IMR-90 (cell line): ENCODE measurements at regions of chr1 and their contacts with region 1.

Region 1: DNA sequence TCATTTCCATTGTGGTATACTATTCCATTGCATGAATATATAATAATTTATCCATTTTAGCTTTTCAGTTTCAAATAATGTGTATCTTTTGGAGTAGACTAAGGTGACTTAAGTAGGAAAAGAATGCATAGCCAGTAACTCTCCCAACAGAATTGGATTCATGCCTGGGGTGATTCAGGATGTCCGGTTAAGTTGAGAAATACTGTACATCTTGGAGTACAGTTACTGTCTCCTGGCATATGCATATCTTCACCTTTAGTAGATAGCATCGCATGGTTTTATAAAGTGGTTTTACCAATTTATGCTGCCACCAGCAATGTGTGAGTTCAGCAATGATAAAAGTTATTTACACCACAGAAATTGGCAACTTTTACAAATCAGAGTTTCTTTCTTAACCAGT is 18.6 kb upstream of the SLC6A9 start:
- DNase-seq: peak; percentile 97
- ATAC-seq: peak; percentile 57
- H3K4me3 ChIP-seq: no peak overlapping the region
- H3K27ac ChIP-seq: peak overlapping the region; percentile 70
- H3K4me1 ChIP-seq: peaks cover 18% of the 10 kb centered on the region
- H3K27me3 ChIP-seq: no peaks in the 10 kb centered on the region
- CTCF ChIP-seq: no peak
- POLR2A ChIP-seq: no peak
- RAD21 ChIP-seq: no peak

Region 2: DNA sequence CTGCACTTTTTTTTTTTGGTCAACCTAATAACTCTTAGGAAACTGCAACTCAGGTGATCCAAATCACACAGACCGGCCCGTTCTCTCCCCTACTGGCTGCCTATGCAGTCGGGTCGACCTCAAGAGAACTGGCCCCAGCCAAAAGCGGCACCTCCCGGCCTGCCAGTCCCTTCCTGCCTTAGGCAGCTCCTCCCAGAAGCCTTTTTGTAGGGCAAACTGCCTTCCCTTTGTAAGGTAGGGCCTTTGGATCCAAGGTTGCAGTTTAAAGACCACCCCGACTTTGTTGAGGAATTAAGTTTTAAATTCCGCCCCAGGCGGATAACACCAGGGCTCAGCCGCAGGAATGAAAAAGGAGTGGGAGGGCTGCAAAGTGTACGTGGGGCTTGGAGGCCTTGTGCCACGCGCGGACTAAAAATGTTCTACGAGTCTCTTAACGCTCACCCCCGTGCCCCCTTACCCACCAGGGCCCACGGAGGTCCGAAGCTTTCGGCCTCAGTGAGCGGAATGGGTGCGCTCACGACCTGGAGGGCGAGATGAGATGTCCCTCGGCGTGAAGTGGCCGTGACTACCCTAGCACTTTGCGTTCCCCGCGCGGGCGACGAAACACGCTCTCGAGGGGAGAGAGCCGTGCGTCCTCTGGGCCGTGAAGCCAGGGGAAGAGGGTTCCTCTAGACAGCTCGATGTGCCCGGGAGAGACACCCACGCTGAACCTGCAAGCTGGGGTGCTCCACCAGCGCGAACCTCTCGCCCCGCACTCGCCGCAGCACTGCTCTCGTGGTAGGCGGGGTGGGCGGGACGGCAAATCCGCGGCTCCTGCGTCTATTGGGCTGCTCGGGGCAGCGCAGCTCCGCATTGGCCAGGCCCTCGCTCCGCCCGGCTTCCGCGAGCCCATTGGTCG is 343.0 kb before region 1 on chr1:
- CTCF ChIA-PET with region 1: no interaction called
- POLR2A ChIA-PET with region 1: no interaction called
- dilution Hi-C with region 1: no loop called
- in situ Hi-C with region 1: no loop called
- intact Hi-C with region 1: loop called (anchors 5 kb)
- DNase-seq: peak; percentile 90
- ATAC-seq: peak; percentile 89
- H3K4me3 ChIP-seq: peak overlapping the region; percentile 84
- H3K27ac ChIP-seq: peak overlapping the region; percentile 63
- H3K4me1 ChIP-seq: peaks cover 11% of the 10 kb centered on the region
- H3K27me3 ChIP-seq: no peaks in the 10 kb centered on the region
- CTCF ChIP-seq: no peak
- POLR2A ChIP-seq: peak; percentile 62; the same call in 1 of the 2 replicates
- RAD21 ChIP-seq: no peak

Region 3: DNA sequence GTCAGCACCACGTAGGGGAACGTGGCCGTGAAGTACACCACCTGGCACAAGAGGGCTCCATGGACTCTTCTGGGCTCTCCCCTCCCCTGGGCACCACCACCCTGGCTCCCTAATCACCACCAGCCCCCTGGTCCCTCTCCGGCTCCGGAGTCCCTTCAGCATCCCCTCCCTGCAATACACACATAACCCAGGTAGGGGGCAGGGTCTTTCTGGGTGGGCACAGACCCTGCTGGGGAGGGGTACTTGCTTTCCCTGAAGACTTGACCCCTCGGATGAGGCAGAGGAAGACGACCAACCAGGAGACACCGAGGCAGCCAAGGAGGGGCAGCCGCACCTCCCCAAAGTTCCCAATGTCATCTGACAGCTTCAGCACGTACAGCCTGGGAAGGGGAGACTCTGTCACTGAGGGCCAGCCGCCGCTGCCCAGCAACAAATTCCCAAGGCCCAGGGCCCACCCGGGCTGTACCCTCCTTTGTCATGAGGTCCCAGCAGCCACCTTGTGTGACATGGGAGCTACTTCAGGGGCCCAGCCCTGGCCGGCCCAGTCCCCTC is 47.2 kb before region 1 on chr1:
- CTCF ChIA-PET with region 1: interaction called, 20 read pairs
- POLR2A ChIA-PET with region 1: no interaction called
- dilution Hi-C with region 1: no loop called
- in situ Hi-C with region 1: loop called (anchors 5 kb)
- intact Hi-C with region 1: loop called (anchors 1 kb)
- DNase-seq: no peak
- ATAC-seq: no peak
- H3K4me3 ChIP-seq: no peak overlapping the region
- H3K27ac ChIP-seq: no peak overlapping the region
- H3K4me1 ChIP-seq: no peaks in the 10 kb centered on the region; the same call in 1 of the 2 replicates
- H3K27me3 ChIP-seq: no peaks in the 10 kb centered on the region
- CTCF ChIP-seq: no peak
- POLR2A ChIP-seq: no peak
- RAD21 ChIP-seq: no peak

Region 4: GRCh38 chr1:44012941-44013609 is 36.8 kb before region 1 on chr1:
- CTCF ChIA-PET with region 1: interaction called, 7 read pairs
- POLR2A ChIA-PET with region 1: no interaction called
- dilution Hi-C with region 1: no loop called
- in situ Hi-C with region 1: loop called (anchors 5 kb)
- intact Hi-C with region 1: no loop called
- DNase-seq: no peak
- ATAC-seq: no peak
- H3K4me3 ChIP-seq: no peak overlapping the region
- H3K27ac ChIP-seq: no peak overlapping the region
- H3K4me1 ChIP-seq: no peaks in the 10 kb centered on the region
- H3K27me3 ChIP-seq: no peaks in the 10 kb centered on the region
- CTCF ChIP-seq: no peak
- POLR2A ChIP-seq: no peak
- RAD21 ChIP-seq: no peak

Region 5: GRCh38 chr1:44036409-44037139 is 13.3 kb before region 1 on chr1:
- CTCF ChIA-PET with region 1: interaction called, 16 read pairs
- POLR2A ChIA-PET with region 1: no interaction called
- dilution Hi-C with region 1: no loop called
- in situ Hi-C with region 1: no loop called
- intact Hi-C with region 1: no loop called
- DNase-seq: peak; percentile 61
- ATAC-seq: peak; percentile 80
- H3K4me3 ChIP-seq: no peak overlapping the region
- H3K27ac ChIP-seq: no peak overlapping the region
- H3K4me1 ChIP-seq: peaks cover 7% of the 10 kb centered on the region; the same call in 1 of the 2 replicates
- H3K27me3 ChIP-seq: no peaks in the 10 kb centered on the region
- CTCF ChIP-seq: peak; percentile 73
- POLR2A ChIP-seq: no peak
- RAD21 ChIP-seq: peak; percentile 81

Region 6: DNA sequence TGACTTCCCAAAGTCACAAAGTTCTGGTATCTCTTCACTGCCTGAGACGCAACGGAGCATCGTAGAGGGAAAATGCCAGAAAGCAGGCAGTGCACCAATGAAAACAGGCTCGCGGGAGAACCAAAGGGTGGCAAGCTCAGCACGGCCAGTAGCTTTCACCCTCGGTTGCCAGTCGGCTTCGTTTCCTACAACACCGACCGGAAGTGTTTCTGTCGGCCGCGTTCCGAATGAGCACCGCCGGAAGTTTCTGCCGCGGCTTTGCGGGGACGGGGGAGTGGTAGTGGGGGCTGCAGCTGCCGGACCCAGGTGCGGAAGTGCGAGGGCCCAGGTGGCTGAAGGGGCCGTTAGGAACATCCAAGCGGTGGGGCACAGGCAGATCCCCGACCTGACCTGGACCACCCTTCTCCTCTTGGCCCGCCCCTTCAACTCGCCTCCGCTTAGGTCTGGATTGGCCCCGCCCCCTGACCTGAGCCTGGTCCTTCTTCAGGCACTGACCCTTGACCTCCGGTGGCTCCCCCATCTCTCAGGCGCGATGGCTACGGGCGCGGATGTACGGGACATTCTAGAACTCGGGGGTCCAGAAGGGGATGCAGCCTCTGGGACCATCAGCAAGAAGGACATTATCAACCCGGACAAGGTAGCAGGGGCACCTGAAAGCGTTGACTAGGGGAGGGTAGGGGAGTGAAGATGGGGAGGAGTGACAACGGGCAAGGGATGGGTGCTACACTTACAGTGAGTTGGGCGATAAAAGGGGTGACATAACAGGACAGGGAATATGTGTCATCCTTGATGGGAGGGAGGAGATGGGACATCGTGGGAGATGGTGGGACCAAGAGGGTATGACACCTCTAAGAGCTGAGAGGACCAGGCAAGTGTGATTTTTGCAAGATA is 163.6 kb after region 1 on chr1 and contains the start of gene DMAP1:
- CTCF ChIA-PET with region 1: interaction called, 3 read pairs
- POLR2A ChIA-PET with region 1: no interaction called
- dilution Hi-C with region 1: no loop called
- in situ Hi-C with region 1: no loop called
- intact Hi-C with region 1: loop called (anchors 5 kb)
- DNase-seq: peak; percentile 83
- ATAC-seq: peak; percentile 91
- H3K4me3 ChIP-seq: peak within 1 kb of the TSS; percentile 82
- H3K27ac ChIP-seq: peak within 1 kb of the TSS; percentile 75
- H3K4me1 ChIP-seq: peaks cover 3% of the 10 kb centered on the region
- H3K27me3 ChIP-seq: no peaks in the 10 kb centered on the region
- CTCF ChIP-seq: 0 out of 2 replicates have a peak, but pooled peaks have one; percentile 2
- POLR2A ChIP-seq: no peak
- RAD21 ChIP-seq: peak; percentile 39
- total RNA-seq, gene DMAP1: 18.1 and 22.2 TPM in 2 replicates